ENCODE measurements at regions of chr6 and their contacts with region 1.

Region 1: DNA sequence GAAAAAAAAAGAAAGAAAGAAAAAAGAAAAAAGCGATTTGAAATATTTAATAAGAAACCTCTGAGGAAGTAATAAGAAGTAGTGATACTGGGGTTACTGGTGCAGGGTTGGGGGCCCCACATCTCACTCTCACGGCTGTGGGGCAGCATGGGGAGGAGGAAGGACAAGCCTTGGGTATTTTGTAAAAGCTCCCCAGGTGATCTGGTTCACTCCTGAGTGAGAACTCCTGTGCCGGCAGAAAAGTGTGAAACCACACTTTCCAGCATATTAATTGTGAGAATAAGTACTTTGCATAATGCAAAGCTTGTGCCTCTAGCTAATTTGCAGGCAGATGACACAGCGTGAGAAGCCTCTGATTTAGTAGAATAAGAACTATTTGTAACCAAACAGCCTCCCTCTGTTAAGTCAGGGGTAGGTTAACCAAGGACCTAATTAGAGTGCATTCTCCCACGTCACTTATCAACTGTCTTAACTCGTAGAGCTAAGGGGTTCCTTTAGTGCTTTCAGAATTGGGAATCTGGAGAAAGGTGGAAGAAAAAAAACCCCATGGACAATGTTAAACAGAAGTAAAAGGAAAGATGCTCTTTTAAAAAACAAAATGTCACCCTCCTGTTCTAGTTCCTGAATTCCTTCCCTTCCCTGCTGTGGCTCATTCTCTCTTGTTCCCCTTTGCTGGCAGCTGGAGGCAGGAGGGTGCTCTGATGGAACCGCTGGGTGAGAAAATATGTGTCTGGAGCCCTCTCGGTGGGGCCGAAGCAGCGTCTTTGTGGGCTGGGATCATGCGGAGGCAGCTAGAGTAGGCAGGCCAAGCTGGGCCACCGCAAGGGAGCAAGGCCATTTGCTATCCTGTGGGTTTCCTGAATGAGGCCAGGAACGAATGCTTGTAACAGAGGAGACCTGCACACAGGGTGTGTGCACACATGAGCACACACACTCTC is 108.7 kb downstream of the FYN start:
- DNase-seq: peak; percentile 41
- H3K4me3 Mint-ChIP-seq: peak overlapping the region; percentile 74
- H3K27ac Mint-ChIP-seq: peak overlapping the region; percentile 90
- H3K4me1 Mint-ChIP-seq: peaks cover 100% of the 10 kb centered on the region
- H3K27me3 Mint-ChIP-seq: no peaks in the 10 kb centered on the region

Region 2: GRCh38 chr6:111657146-111657545 is 107.4 kb before region 1 on chr6:
- intact Hi-C with region 1: no loop called
- DNase-seq: no peak
- H3K4me3 Mint-ChIP-seq: no peak overlapping the region
- H3K27ac Mint-ChIP-seq: no peak overlapping the region
- H3K4me1 Mint-ChIP-seq: no peaks in the 10 kb centered on the region
- H3K27me3 Mint-ChIP-seq: peaks cover 1% of the 10 kb centered on the region

Region 3: DNA sequence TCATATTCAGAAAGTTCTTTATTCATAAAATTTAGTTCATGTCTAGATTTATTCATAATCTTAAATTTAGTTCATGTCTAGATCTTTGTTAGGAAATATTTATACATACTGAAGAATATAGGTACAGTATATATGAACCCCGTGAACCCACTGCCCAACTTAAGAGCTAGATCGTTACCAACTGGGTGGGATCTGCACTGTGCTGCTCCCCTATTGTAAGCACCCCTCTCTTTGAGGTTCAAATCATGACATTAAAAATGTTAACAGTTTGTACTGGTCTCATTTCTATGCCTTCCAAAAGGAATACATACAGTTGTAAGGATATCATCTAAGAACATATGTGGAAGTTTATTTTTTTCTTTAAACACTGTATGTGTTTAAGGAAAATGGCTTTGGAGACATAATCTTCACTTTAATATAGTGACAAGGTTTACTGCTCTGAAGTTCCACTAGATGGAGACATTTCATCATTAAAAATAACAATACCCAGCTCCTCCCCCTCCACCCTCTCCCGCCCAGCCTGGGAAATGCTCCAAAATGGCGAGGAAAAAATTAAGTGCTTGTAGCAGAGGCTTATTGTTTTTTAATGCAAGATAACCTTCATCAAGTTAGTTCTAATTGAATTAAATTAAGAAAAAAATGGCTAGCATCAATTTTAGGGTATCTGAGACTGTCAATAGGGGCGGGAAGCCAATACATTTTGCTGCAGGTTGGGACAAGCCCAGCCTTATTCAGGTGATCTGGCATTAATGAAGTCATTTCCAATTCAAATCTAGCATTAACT is 54.7 kb before region 1 on chr6:
- intact Hi-C with region 1: loop called (anchors 2 kb)
- DNase-seq: peak; percentile 41
- H3K4me3 Mint-ChIP-seq: peak overlapping the region; percentile 45
- H3K27ac Mint-ChIP-seq: peak overlapping the region; percentile 44
- H3K4me1 Mint-ChIP-seq: peaks cover 66% of the 10 kb centered on the region
- H3K27me3 Mint-ChIP-seq: no peaks in the 10 kb centered on the region

Region 4: DNA sequence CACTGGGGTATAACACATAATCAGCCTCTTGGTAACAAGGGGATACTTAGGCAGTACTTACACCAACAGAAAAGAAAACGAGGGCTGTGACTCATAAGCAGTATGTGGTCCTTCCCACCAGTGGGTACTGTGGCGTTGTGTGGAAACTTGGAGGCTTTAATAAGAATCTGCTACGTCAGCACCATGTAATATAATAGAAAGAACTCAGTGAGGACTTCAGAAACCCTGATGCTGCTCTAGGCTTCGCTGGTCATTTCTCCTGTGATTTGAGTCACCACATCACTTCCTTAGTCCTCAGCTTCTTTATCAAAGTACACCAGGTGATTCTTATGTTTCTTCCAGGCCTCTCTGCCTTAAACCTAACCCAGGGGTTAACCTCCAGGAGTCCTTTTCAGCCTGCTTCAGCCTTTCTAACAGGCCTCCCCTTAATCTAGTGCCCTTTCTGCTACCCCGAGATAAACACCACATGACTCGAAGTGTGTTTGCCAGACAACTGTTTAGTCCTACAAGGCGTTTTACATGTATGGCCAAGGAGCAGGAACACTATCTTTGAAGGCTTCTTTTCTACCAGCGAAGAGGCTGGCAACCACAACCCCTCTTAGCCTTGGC is 40.2 kb after region 1 on chr6:
- intact Hi-C with region 1: loop called (anchors 1 kb)
- DNase-seq: peak; percentile 67
- H3K4me3 Mint-ChIP-seq: peak overlapping the region; percentile 74
- H3K27ac Mint-ChIP-seq: peak overlapping the region; percentile 98
- H3K4me1 Mint-ChIP-seq: peaks cover 84% of the 10 kb centered on the region
- H3K27me3 Mint-ChIP-seq: no peaks in the 10 kb centered on the region

Region 5: GRCh38 chr6:111973118-111973761 is 208.7 kb after region 1 on chr6:
- intact Hi-C with region 1: loop called (anchors 1 kb)
- DNase-seq: peak; percentile 47
- H3K4me3 Mint-ChIP-seq: peak overlapping the region; percentile 53
- H3K27ac Mint-ChIP-seq: peak overlapping the region; percentile 87
- H3K4me1 Mint-ChIP-seq: peaks cover 55% of the 10 kb centered on the region
- H3K27me3 Mint-ChIP-seq: no peaks in the 10 kb centered on the region

Region 6: DNA sequence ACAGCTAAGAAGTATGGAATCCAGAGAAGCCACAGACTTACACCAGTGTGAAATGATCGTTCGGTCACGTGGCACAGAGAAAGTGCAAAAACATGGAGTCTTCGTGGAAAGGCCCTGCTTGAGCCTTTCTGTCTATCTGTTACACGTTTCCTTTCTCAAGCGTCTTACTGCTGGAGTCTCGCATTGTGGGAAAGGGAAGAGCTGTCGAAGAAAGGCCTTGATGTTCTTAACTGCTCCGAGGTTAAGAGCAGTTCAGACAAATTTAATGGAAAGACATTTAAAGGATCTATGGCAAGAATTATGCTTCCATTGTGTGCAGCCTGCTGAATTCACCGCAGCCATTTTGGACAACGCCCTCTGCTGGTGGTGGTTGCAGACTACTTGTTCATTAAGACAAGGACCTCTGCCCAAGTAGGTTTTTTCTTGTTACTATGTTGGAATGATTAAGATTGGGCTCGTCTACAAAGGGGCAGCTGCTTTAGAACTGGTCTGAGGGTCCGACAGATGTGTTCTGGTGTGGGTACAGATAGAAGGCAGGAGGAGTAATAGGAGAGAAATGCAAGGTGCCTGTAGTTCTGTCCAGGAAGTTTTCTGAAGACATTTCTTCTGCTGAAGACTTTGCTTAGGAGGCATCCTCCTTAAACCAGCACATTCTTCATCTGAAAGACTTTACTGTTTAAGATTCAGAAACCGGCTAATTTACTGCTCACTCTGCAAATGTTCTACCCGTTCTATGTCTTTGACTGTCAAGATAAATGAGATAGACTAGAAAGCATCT is 264.7 kb after region 1 on chr6:
- intact Hi-C with region 1: loop called (anchors 2 kb)
- DNase-seq: peak; percentile 51
- H3K4me3 Mint-ChIP-seq: no peak overlapping the region
- H3K27ac Mint-ChIP-seq: peak overlapping the region; percentile 68
- H3K4me1 Mint-ChIP-seq: peaks cover 74% of the 10 kb centered on the region
- H3K27me3 Mint-ChIP-seq: no peaks in the 10 kb centered on the region

Region 7: DNA sequence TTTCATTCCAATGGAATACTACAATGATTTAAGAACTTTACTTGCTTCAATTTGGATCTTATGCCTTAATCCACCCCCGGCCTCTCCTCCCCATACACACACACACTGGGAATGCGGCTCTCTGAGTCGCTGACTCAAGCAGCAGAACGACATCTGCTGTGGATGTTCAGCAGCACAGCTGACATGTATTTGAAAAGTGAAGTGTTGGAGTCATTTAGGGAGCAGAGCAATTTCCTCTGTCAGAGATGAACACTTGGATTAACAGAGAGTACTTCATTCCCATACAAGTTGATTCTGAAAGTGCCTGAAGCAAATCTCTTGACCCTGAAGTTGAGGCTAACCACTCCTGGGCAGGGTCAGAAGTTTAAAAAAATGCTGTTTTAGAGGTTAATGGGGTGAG is 517.7 kb after region 1 on chr6:
- intact Hi-C with region 1: loop called (anchors 10 kb)
- DNase-seq: no peak
- H3K4me3 Mint-ChIP-seq: no peak overlapping the region
- H3K27ac Mint-ChIP-seq: no peak overlapping the region
- H3K4me1 Mint-ChIP-seq: peaks cover 16% of the 10 kb centered on the region
- H3K27me3 Mint-ChIP-seq: peaks cover 55% of the 10 kb centered on the region

Measured in activated T-helper 1 cell treated with anti-CD3 and anti-CD28 coated beads, Interleukin-12 subunit alpha, Interleukin-12 subunit beta, Interleukin-2, Interleukin-4 antibody, amounts not matched to agents 30 ng/mL and 10 ng/mL and 1 ng/mL, durations not matched to agents 14 hours and 24 hours and 36 hours (primary cell).